Activated CD4-positive, alpha-beta T cell treated with anti-CD3 and anti-CD28 coated beads for 36 hours (primary cell): ENCODE measurements at regions of chr22 and their contacts with region 1.

Region 1: DNA sequence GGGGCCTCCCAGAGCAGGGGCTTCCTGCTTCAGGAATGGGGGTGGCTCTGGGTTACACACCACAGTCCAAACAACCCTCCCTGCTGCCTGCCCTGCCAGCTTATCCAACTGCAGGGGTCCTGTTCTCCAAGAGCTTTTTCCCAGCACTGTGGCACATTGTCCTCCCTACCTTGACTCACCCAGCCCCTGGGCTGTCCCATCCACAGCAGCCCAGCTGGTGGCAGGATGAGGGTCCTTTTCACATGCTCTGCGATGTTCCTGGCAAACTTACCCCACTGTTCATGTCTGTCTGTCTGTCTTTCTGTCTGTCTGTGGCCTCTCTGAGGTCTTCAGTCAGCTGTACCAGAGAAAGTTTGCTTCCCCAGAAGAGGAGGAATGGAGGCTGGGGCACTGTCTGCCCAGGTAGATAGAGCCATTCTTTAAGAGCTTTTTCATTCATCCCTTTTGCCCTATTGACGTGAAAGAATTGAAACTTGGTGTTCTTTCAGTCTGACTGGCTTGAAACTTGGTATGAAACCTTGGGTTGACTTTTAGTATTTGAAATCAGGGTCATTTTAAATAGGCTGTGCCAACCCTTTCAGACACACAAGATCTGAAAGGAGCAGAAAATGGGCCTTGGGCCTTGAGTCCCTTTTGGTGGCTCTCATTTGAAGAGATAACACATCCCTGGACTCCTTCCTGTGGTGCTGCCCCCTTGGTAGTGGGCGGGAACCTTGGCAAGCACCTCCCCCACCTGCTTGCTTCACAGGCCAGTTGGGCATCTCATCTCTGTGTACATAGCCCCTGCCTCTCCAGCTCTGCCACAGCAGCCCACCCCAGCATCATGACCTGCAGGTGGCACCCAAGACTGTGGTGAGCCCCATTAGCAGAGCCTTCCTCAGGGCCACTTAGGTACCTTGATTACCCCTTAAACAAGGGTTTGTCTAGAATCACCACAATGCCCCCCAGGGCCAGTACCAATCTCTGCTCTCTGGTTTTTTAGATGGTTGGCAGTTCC is 74.6 kb upstream of the SUSD2 start:
- DNase-seq: peak; percentile 41
- ATAC-seq: peak; percentile 88
- H3K4me3 Mint-ChIP-seq: no peak overlapping the region
- H3K27ac Mint-ChIP-seq: peak overlapping the region; percentile 69
- H3K4me1 Mint-ChIP-seq: peaks cover 31% of the 10 kb centered on the region
- H3K27me3 Mint-ChIP-seq: no peaks in the 10 kb centered on the region

Region 2: GRCh38 chr22:24175160-24175808 is 68.6 kb after region 1 on chr22:
- CTCF ChIA-PET with region 1: interaction called, 10 read pairs
- POLR2A ChIA-PET with region 1: no interaction called
- intact Hi-C with region 1: loop called in 1 of 2 experiments (anchors 1 kb)
- DNase-seq: peak; percentile 81
- ATAC-seq: peak; percentile 64
- H3K4me3 Mint-ChIP-seq: no peak overlapping the region
- H3K27ac Mint-ChIP-seq: no peak overlapping the region
- H3K4me1 Mint-ChIP-seq: no peaks in the 10 kb centered on the region
- H3K27me3 Mint-ChIP-seq: no peaks in the 10 kb centered on the region